ENCODE measurements at regions of chr18 and their contacts with region 1.

Region 1: DNA sequence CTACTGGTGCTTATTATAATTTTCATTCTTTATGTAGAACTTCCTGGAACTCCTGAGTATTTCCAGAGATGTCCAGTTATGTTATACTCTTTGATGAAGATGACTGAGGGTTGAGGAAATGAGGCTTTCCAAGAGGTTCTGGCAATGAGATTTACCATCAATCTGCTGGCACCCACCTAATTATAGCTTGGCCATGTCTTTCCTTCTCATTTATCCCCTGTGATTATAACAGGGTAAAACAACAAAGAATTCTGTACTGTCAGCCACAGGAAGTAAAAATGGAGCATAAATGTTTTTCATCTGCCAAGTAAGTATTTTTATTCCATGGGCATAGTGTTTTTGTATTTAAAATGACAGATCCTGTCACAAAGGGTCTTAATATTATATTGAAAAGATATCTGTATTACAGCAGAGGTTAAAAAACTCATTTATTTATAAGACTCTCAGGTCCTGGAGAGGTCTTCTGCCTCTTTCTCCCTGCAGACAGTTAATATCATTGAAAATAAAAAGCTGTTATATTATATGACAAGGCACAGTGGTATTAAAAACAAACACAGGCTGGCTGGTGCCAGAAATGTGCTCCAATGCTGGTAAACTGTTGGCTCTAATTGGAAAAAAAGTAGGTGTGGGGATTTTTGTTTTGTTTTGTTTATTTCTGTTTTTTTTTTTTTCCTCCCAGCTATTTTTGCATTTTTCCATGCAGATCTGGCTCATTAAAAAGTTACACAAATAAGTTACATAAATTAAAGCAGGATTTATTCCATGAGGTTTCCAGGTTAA is 1764.1 kb upstream of the CELF4 start:
- DNase-seq: no peak
- ATAC-seq: no peak
- H3K4me3 ChIP-seq: no peak overlapping the region
- H3K27ac ChIP-seq: no peak overlapping the region
- H3K4me1 ChIP-seq: no peaks in the 10 kb centered on the region
- H3K27me3 ChIP-seq: no peaks in the 10 kb centered on the region
- CTCF ChIP-seq: no peak
- POLR2A ChIP-seq: no peak

Region 2: DNA sequence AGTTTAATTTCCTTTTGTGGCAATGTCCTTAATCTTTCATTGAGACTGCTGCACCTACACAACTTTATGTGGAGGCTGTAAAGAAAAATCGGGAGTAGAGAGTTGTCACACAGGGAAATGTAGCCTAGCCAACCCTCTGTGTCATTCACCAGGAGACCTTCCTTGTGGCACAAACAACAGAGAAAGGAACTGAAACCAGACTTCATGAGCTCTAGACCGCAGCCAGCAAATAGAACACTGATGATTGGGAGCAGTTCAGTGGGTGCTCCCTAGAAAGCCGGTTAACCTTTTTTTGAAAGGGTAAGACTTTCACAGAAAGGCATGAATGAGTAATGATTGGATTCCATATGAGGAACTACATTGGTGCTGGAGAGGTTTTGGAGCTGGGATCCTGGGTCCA is 11.7 kb before region 1 on chr18:
- intact Hi-C with region 1: loop called in 1 of 10 experiments (anchors 1 kb)
- DNase-seq: no peak
- ATAC-seq: peak in 1 of 4 donors; percentile 34
- H3K4me3 ChIP-seq: no peak overlapping the region
- H3K27ac ChIP-seq: no peak overlapping the region
- H3K4me1 ChIP-seq: no peaks in the 10 kb centered on the region
- H3K27me3 ChIP-seq: no peaks in the 10 kb centered on the region
- CTCF ChIP-seq: no peak
- POLR2A ChIP-seq: no peak